Colonic mucosa (tissue), 4 donors: ENCODE measurements at regions of chr1 and their contacts with region 1.

Region 1: DNA sequence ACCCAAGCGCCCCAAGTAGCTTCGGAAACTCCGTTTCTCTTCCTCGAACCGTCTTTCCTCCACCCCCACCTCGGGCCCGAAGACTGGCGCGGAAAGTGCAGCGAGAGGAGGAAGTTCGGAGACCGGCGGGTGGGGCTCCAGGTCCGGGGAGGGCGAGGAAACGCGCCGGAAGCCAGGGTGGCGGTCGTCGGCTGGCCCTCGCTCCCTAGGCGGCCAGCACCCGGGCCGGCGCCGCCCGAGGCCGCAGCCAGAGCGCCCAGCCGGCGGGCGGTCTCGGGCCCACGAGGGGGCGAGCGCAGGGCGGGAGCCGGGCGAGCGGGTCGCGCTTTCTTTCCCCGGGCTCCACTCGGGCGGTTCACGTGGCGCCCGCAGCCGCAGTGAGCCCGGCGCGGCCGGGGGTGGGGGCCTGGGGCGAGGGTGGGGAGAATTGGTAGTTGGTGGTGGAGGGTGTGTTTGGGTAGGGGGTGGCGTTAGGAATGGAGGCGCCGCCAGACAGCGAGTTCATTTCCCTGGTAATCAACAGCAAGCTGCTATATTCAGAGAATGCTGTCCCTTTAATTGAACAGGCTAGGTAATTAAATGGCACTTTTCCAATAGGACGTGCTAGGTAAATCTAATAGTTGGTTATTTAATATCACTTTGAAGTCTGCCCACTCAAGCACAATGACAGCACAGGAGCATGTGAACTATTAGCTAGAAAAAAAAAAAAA is 6.7 kb downstream of the LMO4 start:
- DNase-seq: peak; percentile 86
- H3K4me3 ChIP-seq: peak overlapping the region; percentile 47
- H3K27ac ChIP-seq: peak overlapping the region; percentile 56
- H3K4me1 ChIP-seq: peaks cover 15% of the 10 kb centered on the region
- H3K27me3 ChIP-seq: no peaks in the 10 kb centered on the region
- CTCF ChIP-seq: no peak

Region 2: DNA sequence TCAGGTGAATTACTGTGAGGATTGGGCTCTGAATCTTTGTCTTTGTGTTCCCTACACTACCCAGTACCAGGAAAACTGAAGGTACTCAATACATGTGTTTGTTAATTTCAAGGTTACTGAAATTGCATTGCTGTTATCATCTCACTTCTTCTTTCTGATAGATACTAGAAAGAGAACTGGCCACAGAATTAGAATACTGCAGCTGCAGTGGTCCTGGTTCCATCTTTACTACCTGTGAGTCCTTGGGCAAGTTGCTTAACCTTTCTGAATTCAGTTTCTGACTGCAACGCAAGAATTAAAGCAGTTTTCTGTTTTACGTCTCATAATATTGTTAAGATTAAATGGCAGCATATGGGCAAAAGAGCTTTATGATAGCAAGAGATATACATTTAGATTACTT is 256.8 kb after region 1 on chr1:
- intact Hi-C with region 1: loop called (anchors 10 kb)
- DNase-seq: no peak
- H3K4me3 ChIP-seq: no peak overlapping the region
- H3K27ac ChIP-seq: no peak overlapping the region
- H3K4me1 ChIP-seq: no peaks in the 10 kb centered on the region
- H3K27me3 ChIP-seq: no peaks in the 10 kb centered on the region
- CTCF ChIP-seq: no peak

Region 3: DNA sequence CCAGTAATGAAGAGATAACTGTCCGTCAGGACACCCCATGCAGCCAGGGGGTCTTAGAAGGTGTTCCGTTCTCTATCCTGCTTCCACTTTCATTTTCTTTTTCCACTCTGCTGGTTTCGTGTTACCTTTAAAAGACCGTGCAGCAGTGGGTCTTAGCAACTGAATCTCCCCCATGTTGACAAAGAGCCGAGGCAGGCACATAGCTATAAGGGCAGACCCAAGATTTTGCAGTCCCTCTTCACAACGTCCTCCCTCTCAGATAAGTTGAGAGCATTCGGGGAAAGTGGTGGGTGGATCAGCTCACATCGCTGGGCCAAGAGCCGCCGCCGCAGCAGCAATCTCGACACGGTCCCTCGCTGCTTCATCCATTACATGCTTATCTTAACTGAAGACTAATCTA is 348.9 kb after region 1 on chr1:
- intact Hi-C with region 1: loop called (anchors 10 kb)
- DNase-seq: peak; percentile 23
- H3K4me3 ChIP-seq: peak overlapping the region; percentile 28
- H3K27ac ChIP-seq: peak overlapping the region; percentile 19
- H3K4me1 ChIP-seq: peaks cover 9% of the 10 kb centered on the region
- H3K27me3 ChIP-seq: no peaks in the 10 kb centered on the region
- CTCF ChIP-seq: no peak